ENCODE measurements at regions of chr10 and their contacts with region 1.

Region 1: GRCh38 chr10:132331526-132332432 is at the start of gene LRRC27:
- DNase-seq: peak; percentile 99 to 100 (median 100)
- ATAC-seq: peak; percentile 93
- H3K4me3 ChIP-seq: peak within 1 kb of the TSS; percentile 96
- H3K4me3 Mint-ChIP-seq: peak within 1 kb of the TSS; percentile 86 to 96 (median 90)
- H3K27ac ChIP-seq: peak within 1 kb of the TSS; percentile 84
- H3K27ac Mint-ChIP-seq: peak within 1 kb of the TSS; percentile 86 to 97 (median 95)
- H3K4me1 ChIP-seq: peaks cover 11 to 24% of the 10 kb centered on the region in 2 donors
- H3K4me1 Mint-ChIP-seq: peaks cover 45 to 77% (median 66%) of the 10 kb centered on the region in 7 donors
- H3K27me3 ChIP-seq: no peaks in the 10 kb centered on the region
- H3K27me3 Mint-ChIP-seq: peaks cover 0 to 7% (median 0%) of the 10 kb centered on the region in 5 donors
- total RNA-seq, gene LRRC27: 3.4 to 10.8 (median 7.1) TPM

Region 2: DNA sequence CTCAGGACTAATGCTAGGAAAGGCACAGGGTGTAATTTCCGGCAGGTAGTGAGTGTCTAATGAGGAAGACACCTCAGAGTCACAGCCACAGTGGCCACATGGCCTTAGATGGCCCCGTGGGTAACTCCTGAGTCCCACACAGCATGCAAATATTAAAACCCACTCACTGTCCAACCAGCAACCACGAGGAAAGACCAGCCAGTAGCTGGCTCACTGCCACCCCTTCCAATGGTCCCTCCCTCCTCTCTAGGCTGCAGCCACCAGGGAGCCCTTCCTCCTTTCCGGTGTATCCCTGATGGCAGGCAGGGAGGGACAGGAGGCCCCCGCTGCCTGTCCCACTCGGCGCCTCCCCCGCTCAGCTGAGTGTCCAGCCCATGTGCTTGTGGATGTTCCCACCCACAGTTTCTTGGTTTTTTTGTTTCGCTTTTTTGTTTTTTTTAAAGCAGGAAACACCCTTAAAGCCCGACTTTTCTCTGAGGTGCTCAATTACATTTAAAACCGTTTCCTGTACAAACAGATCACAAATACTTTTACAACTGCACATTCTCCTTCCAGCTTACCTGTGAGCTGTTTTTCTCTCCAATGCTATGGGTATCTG is 359.2 kb before region 1 on chr10:
- CTCF ChIA-PET with region 1: no interaction called
- POLR2A ChIA-PET with region 1: no interaction called
- intact Hi-C with region 1: loop called in 1 of 2 experiments (anchors 2 kb)
- DNase-seq: peak in 8 of 9 donors; percentile 44 to 75 (median 68)
- ATAC-seq: peak; percentile 71
- H3K4me3 ChIP-seq: peak overlapping the region; percentile 50
- H3K4me3 Mint-ChIP-seq: peak overlapping the region; percentile 81 to 95 (median 88)
- H3K27ac ChIP-seq: peak overlapping the region; percentile 67
- H3K27ac Mint-ChIP-seq: peak overlapping the region; percentile 89 to 97 (median 96)
- H3K4me1 ChIP-seq: peaks cover 21 to 60% of the 10 kb centered on the region in 2 donors
- H3K4me1 Mint-ChIP-seq: peaks cover 44 to 86% (median 83%) of the 10 kb centered on the region in 7 donors
- H3K27me3 ChIP-seq: no peaks in the 10 kb centered on the region
- H3K27me3 Mint-ChIP-seq: no peaks in the 10 kb centered on the region

Region 3: DNA sequence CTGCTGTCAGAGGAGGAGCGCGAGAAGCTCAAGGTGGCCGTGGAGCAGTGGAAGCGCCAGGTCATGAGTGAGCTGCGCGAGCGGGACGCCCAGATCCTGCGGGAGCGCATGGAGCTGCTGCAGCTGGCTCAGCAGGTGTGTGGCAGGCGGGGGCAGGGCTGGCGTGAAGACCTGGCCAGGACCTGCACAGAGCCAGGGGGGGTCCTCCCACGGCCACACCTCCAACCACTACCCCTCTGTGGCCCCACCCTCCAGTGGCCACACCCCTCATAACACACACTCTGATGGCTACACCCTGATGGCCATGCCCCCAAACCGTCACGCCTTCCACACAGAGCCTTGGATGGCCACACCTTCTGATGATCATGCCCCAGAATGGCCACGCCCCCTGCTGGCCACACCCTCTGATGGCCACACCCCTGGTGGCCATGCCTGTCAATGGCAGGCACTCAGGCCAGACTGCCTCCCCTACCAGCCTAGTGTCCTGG is 168.5 kb before region 1 on chr10:
- CTCF ChIA-PET with region 1: no interaction called
- POLR2A ChIA-PET with region 1: no interaction called
- intact Hi-C with region 1: loop called (anchors 1 to 2 kb)
- DNase-seq: peak in 4 of 9 donors; percentile 25 to 70 (median 43)
- ATAC-seq: peak; percentile 55
- H3K4me3 ChIP-seq: no peak overlapping the region
- H3K4me3 Mint-ChIP-seq: peak overlapping the region in 2 of 10 donors; percentile 30 to 64
- H3K27ac ChIP-seq: peak overlapping the region; percentile 80
- H3K27ac Mint-ChIP-seq: peak overlapping the region in 8 of 9 donors; percentile 28 to 86 (median 73)
- H3K4me1 ChIP-seq: peaks cover 23 to 33% of the 10 kb centered on the region in 2 donors
- H3K4me1 Mint-ChIP-seq: peaks cover 16 to 54% (median 43%) of the 10 kb centered on the region in 7 donors
- H3K27me3 ChIP-seq: no peaks in the 10 kb centered on the region
- H3K27me3 Mint-ChIP-seq: no peaks in the 10 kb centered on the region

Region 4: GRCh38 chr10:132297526-132297925 is 34.3 kb before region 1 on chr10:
- CTCF ChIA-PET with region 1: no interaction called
- POLR2A ChIA-PET with region 1: no interaction called
- intact Hi-C with region 1: no loop called
- DNase-seq: no peak
- ATAC-seq: no peak
- H3K4me3 ChIP-seq: no peak overlapping the region
- H3K4me3 Mint-ChIP-seq: no peak overlapping the region
- H3K27ac ChIP-seq: no peak overlapping the region
- H3K27ac Mint-ChIP-seq: no peak overlapping the region
- H3K4me1 ChIP-seq: no peaks in the 10 kb centered on the region
- H3K4me1 Mint-ChIP-seq: peaks cover 4 to 15% (median 5%) of the 10 kb centered on the region in 7 donors
- H3K27me3 ChIP-seq: no peaks in the 10 kb centered on the region
- H3K27me3 Mint-ChIP-seq: peaks cover 0 to 3% (median 0%) of the 10 kb centered on the region in 5 donors

Region 5: GRCh38 chr10:132396495-132397035 is 64.8 kb after region 1 on chr10:
- CTCF ChIA-PET with region 1: no interaction called
- POLR2A ChIA-PET with region 1: no interaction called
- intact Hi-C with region 1: loop called in 1 of 2 experiments (anchors 2 kb)
- DNase-seq: peak; percentile 61 to 78 (median 74)
- ATAC-seq: peak; percentile 78
- H3K4me3 ChIP-seq: no peak overlapping the region
- H3K4me3 Mint-ChIP-seq: peak overlapping the region in 1 of 10 donors; percentile 94
- H3K27ac ChIP-seq: peak overlapping the region; percentile 77
- H3K27ac Mint-ChIP-seq: no peak overlapping the region
- H3K4me1 ChIP-seq: peaks cover 9 to 10% of the 10 kb centered on the region in 2 donors
- H3K4me1 Mint-ChIP-seq: peaks cover 0 to 42% (median 25%) of the 10 kb centered on the region in 7 donors
- H3K27me3 ChIP-seq: no peaks in the 10 kb centered on the region
- H3K27me3 Mint-ChIP-seq: peaks cover 0 to 6% (median 0%) of the 10 kb centered on the region in 5 donors

Region 6: GRCh38 chr10:132544744-132545581 is 213.2 kb after region 1 on chr10:
- CTCF ChIA-PET with region 1: no interaction called
- POLR2A ChIA-PET with region 1: no interaction called
- intact Hi-C with region 1: loop called in 1 of 2 experiments (anchors 2 kb)
- DNase-seq: peak in 3 of 9 donors; percentile 43 to 53 (median 46)
- ATAC-seq: peak; percentile 64
- H3K4me3 ChIP-seq: peak overlapping the region; percentile 51
- H3K4me3 Mint-ChIP-seq: peak overlapping the region; percentile 84 to 98 (median 90)
- H3K27ac ChIP-seq: peak overlapping the region; percentile 74
- H3K27ac Mint-ChIP-seq: peak overlapping the region; percentile 79 to 96 (median 91)
- H3K4me1 ChIP-seq: peaks cover 0 to 64% of the 10 kb centered on the region in 2 donors
- H3K4me1 Mint-ChIP-seq: peaks cover 65 to 95% (median 80%) of the 10 kb centered on the region in 7 donors
- H3K27me3 ChIP-seq: no peaks in the 10 kb centered on the region
- H3K27me3 Mint-ChIP-seq: no peaks in the 10 kb centered on the region

Region 7: GRCh38 chr10:132904181-132904819 is 572.5 kb after region 1 on chr10:
- CTCF ChIA-PET with region 1: no interaction called
- POLR2A ChIA-PET with region 1: no interaction called
- intact Hi-C with region 1: no loop called
- DNase-seq: peak in 1 of 9 donors; percentile 33
- ATAC-seq: no peak
- H3K4me3 ChIP-seq: no peak overlapping the region
- H3K4me3 Mint-ChIP-seq: no peak overlapping the region
- H3K27ac ChIP-seq: no peak overlapping the region
- H3K27ac Mint-ChIP-seq: no peak overlapping the region
- H3K4me1 ChIP-seq: no peaks in the 10 kb centered on the region
- H3K4me1 Mint-ChIP-seq: peaks cover 0 to 6% (median 0%) of the 10 kb centered on the region in 7 donors
- H3K27me3 ChIP-seq: no peaks in the 10 kb centered on the region
- H3K27me3 Mint-ChIP-seq: peaks cover 0 to 20% (median 12%) of the 10 kb centered on the region in 5 donors